Panc1 (cell line): ENCODE measurements at regions of chr16 and their contacts with region 1.

Region 1: DNA sequence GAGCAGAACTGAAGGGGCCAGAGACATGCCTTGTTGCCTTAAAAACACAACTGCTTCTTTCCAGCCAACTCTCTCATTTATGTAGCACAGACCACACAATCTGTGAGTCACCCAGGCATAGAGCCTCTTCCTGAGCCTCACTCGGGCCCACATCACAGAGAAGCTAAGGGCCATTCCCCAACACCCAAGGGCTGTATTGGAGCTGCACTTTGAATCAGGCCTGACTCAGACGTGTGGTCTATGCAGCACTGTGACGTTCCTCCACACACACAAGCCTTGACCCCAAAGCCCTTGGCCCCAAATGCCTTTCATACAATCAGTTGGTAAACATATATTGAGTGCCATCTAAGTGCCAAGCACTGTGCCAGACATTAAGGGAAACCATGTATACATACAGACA is 308.9 kb upstream of the DYNLRB2 start:
- DNase-seq: no peak
- ATAC-seq: no peak
- H3K4me3 ChIP-seq: no peak overlapping the region
- H3K27ac ChIP-seq: no peak overlapping the region
- H3K4me1 ChIP-seq: no peaks in the 10 kb centered on the region
- H3K27me3 ChIP-seq: no peaks in the 10 kb centered on the region
- CTCF ChIP-seq: no peak

Region 2: GRCh38 chr16:79838496-79839259 is 393.2 kb before region 1 on chr16:
- CTCF ChIA-PET with region 1: no interaction called
- POLR2A ChIA-PET with region 1: no interaction called
- in situ Hi-C with region 1: no loop called
- intact Hi-C with region 1: no loop called
- DNase-seq: no peak
- ATAC-seq: no peak
- H3K4me3 ChIP-seq: no peak overlapping the region
- H3K27ac ChIP-seq: no peak overlapping the region
- H3K4me1 ChIP-seq: no peaks in the 10 kb centered on the region
- H3K27me3 ChIP-seq: no peaks in the 10 kb centered on the region
- CTCF ChIP-seq: no peak

Region 3: DNA sequence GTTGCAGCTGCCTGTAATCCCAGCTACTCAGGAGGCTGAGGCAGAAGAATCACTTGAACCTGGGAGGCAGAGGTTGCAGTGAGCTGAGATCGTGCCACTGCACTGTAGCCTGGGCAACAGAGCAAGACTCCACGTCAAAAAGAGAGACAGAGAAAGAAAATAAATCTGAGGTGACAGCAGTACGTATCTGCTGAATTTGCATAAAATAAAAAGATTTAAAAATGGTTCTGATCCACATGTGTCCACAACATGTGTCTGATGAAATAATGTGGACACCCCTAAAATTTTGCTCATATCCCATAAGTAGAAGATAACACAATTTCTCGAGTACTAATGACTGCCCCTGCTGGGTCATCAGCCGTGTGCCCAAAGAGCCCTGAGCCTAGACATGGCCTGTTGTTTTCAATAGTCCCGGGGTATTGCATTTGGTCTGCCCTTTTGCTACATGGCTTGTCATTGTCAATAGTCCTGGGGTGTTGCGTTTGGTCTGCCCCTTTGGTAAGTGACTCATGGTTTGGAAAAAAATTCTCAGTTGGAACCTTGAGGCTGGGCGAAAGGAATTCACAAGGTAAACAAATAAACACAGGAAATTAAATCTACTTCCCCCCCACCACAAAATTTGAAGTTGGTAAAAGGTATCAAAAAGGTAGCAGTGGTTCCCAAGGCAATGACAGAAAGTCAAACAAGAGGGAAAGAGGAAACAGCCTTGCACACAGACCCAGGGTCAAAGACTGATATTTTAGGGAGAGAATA is 196.8 kb before region 1 on chr16:
- CTCF ChIA-PET with region 1: no interaction called
- POLR2A ChIA-PET with region 1: no interaction called
- in situ Hi-C with region 1: no loop called
- intact Hi-C with region 1: loop called (anchors 5 kb)
- DNase-seq: no peak
- ATAC-seq: no peak
- H3K4me3 ChIP-seq: no peak overlapping the region
- H3K27ac ChIP-seq: no peak overlapping the region
- H3K4me1 ChIP-seq: no peaks in the 10 kb centered on the region
- H3K27me3 ChIP-seq: no peaks in the 10 kb centered on the region
- CTCF ChIP-seq: no peak

Region 4: GRCh38 chr16:80100846-80101451 is 130.9 kb before region 1 on chr16:
- CTCF ChIA-PET with region 1: no interaction called
- POLR2A ChIA-PET with region 1: no interaction called
- in situ Hi-C with region 1: no loop called
- intact Hi-C with region 1: no loop called
- DNase-seq: no peak
- ATAC-seq: no peak
- H3K4me3 ChIP-seq: no peak overlapping the region
- H3K27ac ChIP-seq: no peak overlapping the region
- H3K4me1 ChIP-seq: no peaks in the 10 kb centered on the region
- H3K27me3 ChIP-seq: no peaks in the 10 kb centered on the region
- CTCF ChIP-seq: no peak